ENCODE measurements at regions of chr2 and their contacts with region 1.

Region 1: GRCh38 chr2:105797298-105797819 is 52.6 kb downstream of the NCK2 start:
- DNase-seq: peak; percentile 84
- H3K4me3 ChIP-seq: peak overlapping the region; percentile 56
- H3K27ac ChIP-seq: peak overlapping the region; percentile 89
- H3K4me1 ChIP-seq: peaks cover 76% of the 10 kb centered on the region
- CTCF ChIP-seq: no peak

Region 2: DNA sequence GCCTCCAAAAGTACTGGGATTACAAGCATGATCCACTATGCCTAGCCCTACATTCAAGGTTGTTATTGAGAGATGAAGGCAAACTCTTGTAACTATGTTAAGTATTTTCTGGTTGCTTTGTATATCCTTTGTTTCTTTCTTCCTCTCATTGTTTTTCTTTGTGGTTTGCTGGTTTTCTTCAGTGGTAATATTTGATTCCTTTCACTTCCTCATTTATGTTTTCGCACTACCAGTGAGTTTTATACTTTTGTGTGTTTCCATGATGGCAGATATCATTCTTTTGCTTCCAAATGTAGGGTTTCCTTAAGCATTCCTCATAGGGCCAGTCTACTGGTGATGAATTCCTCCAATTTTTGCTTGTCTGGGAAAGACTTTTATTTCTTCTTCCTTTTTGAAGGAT is 37.6 kb after region 1 on chr2:
- CTCF ChIA-PET with region 1: no interaction called
- POLR2A ChIA-PET with region 1: interaction called, 6 read pairs
- intact Hi-C with region 1: loop called (anchors 2 kb)
- DNase-seq: peak; percentile 82
- H3K4me3 ChIP-seq: peak overlapping the region; percentile 44
- H3K27ac ChIP-seq: peak overlapping the region; percentile 94
- H3K4me1 ChIP-seq: peaks cover 28% of the 10 kb centered on the region
- CTCF ChIP-seq: no peak

Region 3: DNA sequence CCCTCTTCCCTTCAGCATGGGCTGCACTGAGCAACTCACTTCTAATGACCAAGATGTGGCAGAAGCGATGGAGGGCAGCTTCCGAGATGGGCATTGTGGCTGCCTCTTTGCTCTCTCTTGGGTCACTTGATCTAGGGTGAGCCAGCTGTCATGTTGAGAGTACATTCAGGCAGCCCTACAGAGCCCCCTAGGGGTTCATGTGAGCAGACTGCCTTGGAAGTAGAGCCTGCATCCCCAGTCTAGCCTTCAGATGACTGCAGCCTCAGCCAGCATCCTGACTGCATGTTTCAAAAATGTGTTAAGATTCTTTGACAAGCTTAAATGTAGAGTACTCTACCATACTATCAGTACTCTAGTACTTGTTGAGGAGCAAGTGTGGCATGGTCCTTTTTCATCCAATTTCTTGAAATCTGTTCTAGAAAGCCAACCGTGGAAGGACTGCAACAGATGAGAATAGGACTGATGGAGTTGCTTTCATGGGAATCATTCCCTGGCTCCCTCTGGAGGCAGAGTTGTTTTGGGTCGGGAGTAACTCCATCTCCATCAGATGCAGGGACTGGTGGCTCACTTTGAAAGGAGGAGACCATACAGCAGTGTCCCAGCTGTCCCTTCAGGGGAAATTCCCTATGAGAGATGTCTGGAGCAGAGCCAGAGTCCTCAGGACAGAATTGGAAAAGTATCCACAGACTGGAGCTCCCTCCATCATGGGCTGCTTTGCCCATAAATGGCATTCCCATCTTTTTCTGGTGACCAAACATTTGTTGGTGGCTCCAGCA is 91.5 kb after region 1 on chr2:
- CTCF ChIA-PET with region 1: no interaction called
- POLR2A ChIA-PET with region 1: interaction called, 5 read pairs
- intact Hi-C with region 1: loop called (anchors 5 kb)
- DNase-seq: peak; percentile 48
- H3K4me3 ChIP-seq: no peak overlapping the region
- H3K27ac ChIP-seq: no peak overlapping the region
- H3K4me1 ChIP-seq: peaks cover 22% of the 10 kb centered on the region
- CTCF ChIP-seq: peak; percentile 68

Region 4: GRCh38 chr2:105954891-105955290 is 157.5 kb after region 1 on chr2:
- CTCF ChIA-PET with region 1: no interaction called
- POLR2A ChIA-PET with region 1: no interaction called
- intact Hi-C with region 1: no loop called
- DNase-seq: no peak
- H3K4me3 ChIP-seq: no peak overlapping the region
- H3K27ac ChIP-seq: no peak overlapping the region
- H3K4me1 ChIP-seq: no peaks in the 10 kb centered on the region
- CTCF ChIP-seq: no peak

Measured in OCI-LY7 (cell line).